Endothelial cell of umbilical vein (primary cell): ENCODE measurements at regions of chr20 and their contacts with region 1.

Region 1: GRCh38 chr20:34570859-34571306 is 12.4 kb downstream of the MAP1LC3A start:
- DNase-seq: peak; percentile 74
- H3K4me3 ChIP-seq: no peak overlapping the region
- H3K27ac ChIP-seq: peak overlapping the region; percentile 27
- H3K4me1 ChIP-seq: peaks cover 11% of the 10 kb centered on the region
- H3K27me3 ChIP-seq: no peaks in the 10 kb centered on the region
- CTCF ChIP-seq: no peak
- POLR2A ChIP-seq: no peak

Region 2: DNA sequence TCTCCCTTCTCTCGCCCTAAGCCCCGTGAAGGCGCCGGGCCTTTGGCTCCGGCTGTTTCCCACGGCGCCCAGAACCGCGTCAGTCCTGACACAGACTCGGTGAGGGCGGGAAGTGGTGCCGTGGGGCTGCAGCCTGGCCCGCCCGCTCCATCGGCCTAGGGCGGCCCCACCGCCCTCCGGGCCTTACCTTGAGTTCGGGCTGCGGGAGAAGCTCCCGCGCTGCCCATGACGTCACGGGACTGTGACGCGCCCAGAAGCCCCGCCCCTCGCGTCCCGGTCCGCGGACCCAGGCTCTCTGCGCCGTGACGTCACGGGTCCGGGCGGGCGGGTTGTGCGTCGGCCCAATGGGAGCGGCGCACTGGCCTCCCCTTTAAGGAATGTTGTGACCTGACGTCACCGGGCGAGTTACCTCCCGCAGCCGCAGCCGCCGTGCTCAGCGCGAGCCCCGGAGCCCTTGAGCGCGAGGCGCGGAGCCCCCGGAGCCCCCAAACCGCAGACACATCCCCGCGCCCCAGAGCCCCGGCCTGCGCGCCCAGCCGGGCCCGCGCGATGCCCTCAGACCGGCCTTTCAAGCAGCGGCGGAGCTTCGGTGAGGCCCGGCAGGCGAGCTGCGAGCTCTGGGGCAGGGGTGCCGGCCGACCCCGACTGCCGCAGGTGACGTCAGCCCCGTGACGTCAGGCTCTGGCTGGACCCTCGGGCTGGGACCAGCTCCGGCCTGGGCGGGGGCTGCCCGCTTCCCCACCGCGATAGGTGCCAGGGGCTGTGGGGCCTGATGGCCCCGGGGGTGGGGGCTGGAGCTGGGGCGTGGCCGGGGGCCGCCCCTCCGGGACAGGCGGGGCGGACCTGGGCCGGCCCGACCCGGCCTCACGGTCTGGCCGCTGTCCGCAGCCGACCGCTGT is 12.3 kb before region 1 on chr20 and contains the start of gene MAP1LC3A:
- CTCF ChIA-PET with region 1: interaction called, 13 read pairs
- POLR2A ChIA-PET with region 1: no interaction called
- dilution Hi-C with region 1: no loop called
- intact Hi-C with region 1: no loop called
- DNase-seq: peak; percentile 93
- H3K4me3 ChIP-seq: peak within 1 kb of the TSS; percentile 60 to 92 (median 73)
- H3K27ac ChIP-seq: peak within 1 kb of the TSS; percentile 77
- H3K4me1 ChIP-seq: no peaks in the 10 kb centered on the region
- H3K27me3 ChIP-seq: no peaks in the 10 kb centered on the region
- CTCF ChIP-seq: no peak
- POLR2A ChIP-seq: no peak
- total RNA-seq, gene MAP1LC3A: 32.1 and 32.7 TPM in 2 replicates